ENCODE measurements at regions of chr4 and their contacts with region 1.

Region 1: GRCh38 chr4:147866532-147867271 is 134.8 kb downstream of the ARHGAP10 start:
- DNase-seq: peak; percentile 93 to 99
- H3K4me3 ChIP-seq: no peak overlapping the region
- CTCF ChIP-seq: peak in 1 of 3 donors; percentile 93
- POLR2A ChIP-seq: no peak

Region 2: DNA sequence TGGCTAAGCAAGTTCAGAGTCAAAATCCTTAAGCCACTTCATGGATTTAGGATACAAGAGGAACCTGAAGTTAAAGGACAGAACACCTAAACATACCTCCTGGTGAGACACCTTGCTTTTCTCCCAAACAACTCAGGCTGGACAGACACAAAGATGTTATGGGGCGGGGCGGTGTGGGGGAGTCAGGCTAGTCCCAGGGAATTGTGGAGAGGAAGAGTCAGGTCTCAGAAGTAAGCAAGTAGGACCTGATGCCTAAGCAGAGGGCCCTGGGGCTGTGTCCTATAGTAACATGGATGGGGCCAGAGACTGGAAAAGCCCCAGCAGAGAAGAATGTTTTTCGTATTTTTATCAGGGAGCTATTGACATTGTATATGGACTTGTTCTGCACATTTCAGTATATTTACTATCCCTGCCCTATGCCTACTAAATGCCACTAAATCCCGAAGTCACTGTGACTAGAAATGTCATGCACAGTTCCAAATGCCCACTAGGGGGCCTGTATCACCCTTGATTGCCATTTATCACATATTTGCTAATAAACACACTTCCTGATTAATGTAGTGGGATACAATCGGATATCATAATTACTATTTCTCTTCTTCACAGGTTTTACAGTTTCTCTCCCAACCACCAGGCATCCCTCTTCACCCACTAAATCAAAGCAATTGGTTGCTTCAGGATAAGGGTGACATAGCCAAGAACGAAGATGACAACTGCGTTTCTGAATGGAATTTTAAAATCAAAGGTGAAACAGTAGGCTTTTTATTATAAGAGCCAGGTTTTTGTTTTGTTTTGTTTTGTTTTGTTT is 158.6 kb before region 1 on chr4:
- intact Hi-C with region 1: loop called (anchors 2 kb)
- DNase-seq: peak in 1 of 2 donors; percentile 62
- H3K4me3 ChIP-seq: no peak overlapping the region
- CTCF ChIP-seq: peak in 1 of 3 donors; percentile 80
- POLR2A ChIP-seq: no peak